ENCODE measurements at regions of chr3 and their contacts with region 1.

Region 1: GRCh38 chr3:123884203-123884831 is at the start of gene MYLK:
- DNase-seq: no peak
- H3K4me3 ChIP-seq: peak within 1 kb of the TSS; percentile 59 to 67 (median 62)
- H3K27ac ChIP-seq: peak within 1 kb of the TSS; percentile 68 to 73 (median 69)
- H3K4me1 ChIP-seq: peaks cover 7 to 18% (median 15%) of the 10 kb centered on the region in 4 donors
- H3K27me3 ChIP-seq: no peaks in the 10 kb centered on the region
- CTCF ChIP-seq: no peak
- EP300 ChIP-seq: no peak
- POLR2A ChIP-seq: no peak
- total RNA-seq, gene MYLK: 1,983 to 3,208 (median 2,554) TPM

Region 2: GRCh38 chr3:123595396-123596180 is 288.7 kb before region 1 on chr3:
- intact Hi-C with region 1: loop called (anchors 10 kb)
- DNase-seq: peak; percentile 24
- H3K4me3 ChIP-seq: no peak overlapping the region
- H3K27ac ChIP-seq: no peak overlapping the region
- H3K4me1 ChIP-seq: no peaks in the 10 kb centered on the region
- H3K27me3 ChIP-seq: no peaks in the 10 kb centered on the region
- CTCF ChIP-seq: no peak
- EP300 ChIP-seq: no peak
- POLR2A ChIP-seq: no peak

Region 3: DNA sequence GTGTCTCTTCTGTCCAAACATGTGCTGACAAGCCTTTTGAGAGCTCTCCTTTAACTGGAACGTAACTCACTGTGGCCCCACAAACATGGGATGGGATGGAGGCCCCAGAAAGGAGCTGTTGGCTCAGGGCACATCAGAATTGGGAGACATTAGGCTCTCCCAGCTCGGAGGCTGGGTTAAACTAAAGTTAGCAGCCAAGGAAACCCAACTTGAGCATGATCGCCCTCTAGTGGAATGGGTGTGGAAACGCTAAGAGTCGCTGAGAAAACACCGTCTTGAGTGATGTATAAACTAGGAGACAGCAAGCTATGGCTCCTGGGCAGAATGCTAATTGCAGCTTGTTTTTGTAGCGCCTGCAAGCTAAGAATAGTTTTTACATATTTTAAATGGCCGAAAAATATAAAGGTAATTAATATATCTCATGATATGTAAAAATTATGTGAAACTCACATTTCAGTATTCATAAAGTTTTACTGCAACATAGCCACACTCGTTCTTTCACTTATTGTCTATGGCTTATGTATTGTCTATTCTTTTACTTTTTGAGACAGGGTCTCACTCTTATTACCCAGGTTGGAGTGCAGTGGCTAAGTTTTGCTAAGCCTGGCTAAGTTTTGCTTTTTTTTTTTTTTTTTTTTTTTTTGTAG is 160.7 kb before region 1 on chr3:
- intact Hi-C with region 1: loop called (anchors 10 kb)
- DNase-seq: no peak
- H3K4me3 ChIP-seq: no peak overlapping the region
- H3K27ac ChIP-seq: peak overlapping the region; percentile 67 to 91 (median 78)
- H3K4me1 ChIP-seq: peaks cover 18 to 54% (median 51%) of the 10 kb centered on the region in 4 donors
- H3K27me3 ChIP-seq: no peaks in the 10 kb centered on the region
- CTCF ChIP-seq: peak; percentile 78 to 93 (median 86)
- EP300 ChIP-seq: no peak
- POLR2A ChIP-seq: no peak

Region 4: GRCh38 chr3:123757281-123757940 is 126.9 kb before region 1 on chr3:
- intact Hi-C with region 1: loop called (anchors 10 kb)
- DNase-seq: no peak
- H3K4me3 ChIP-seq: no peak overlapping the region
- H3K27ac ChIP-seq: peak overlapping the region; percentile 13 to 57 (median 28)
- H3K4me1 ChIP-seq: peaks cover 6 to 61% (median 45%) of the 10 kb centered on the region in 4 donors
- H3K27me3 ChIP-seq: no peaks in the 10 kb centered on the region
- CTCF ChIP-seq: no peak
- EP300 ChIP-seq: no peak
- POLR2A ChIP-seq: no peak

Region 5: DNA sequence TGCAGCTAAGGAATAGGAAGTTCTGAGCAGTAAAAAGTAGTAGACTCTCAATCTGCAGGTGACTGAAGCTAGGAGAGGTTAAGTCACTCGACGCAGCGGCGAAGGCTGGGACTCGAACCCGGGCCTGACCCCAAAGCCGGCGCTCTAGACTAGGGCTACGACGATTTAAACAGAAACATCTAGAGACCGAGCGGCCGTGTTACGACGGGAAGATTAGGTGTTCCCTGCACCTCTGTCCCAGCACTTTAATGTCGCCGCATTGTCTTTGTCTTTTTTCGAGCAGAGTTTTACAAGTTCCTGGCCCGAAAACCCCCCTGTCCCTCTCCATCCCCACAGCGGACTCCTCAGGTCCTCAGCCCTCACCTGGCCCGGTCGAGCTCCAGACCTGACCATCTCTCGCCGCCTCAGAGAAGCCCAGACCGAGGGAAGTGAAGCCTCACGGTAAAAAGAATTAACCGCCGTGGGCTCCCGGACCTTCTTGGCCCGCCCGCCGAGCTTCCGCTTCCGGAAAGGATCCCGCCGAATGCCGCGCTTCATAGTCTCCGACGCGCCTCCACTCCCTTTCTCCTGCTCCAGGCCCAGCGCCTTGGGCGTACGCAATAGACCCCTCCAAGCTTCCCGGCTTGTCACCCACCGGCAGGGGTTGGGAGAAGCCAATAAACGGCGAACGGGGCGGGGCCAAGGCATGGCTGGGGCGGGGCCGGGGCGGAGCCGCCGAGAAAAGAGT is 76.6 kb after region 1 on chr3 and contains the start of gene CCDC14:
- intact Hi-C with region 1: loop called (anchors 10 kb)
- DNase-seq: peak; percentile 97
- H3K4me3 ChIP-seq: peak within 1 kb of the TSS; percentile 64 to 81 (median 71)
- H3K27ac ChIP-seq: peak within 1 kb of the TSS; percentile 79 to 90 (median 84)
- H3K4me1 ChIP-seq: peaks cover 9 to 21% (median 13%) of the 10 kb centered on the region in 4 donors
- H3K27me3 ChIP-seq: no peaks in the 10 kb centered on the region
- CTCF ChIP-seq: no peak
- EP300 ChIP-seq: no peak
- POLR2A ChIP-seq: no peak
- total RNA-seq, gene CCDC14: 10.1 to 30.3 (median 17.9) TPM